Panc1 (cell line): ENCODE measurements at regions of chr10 and their contacts with region 1.

Region 1: GRCh38 chr10:60883187-60883586 is 60.8 kb downstream of the RHOBTB1 start:
- DNase-seq: peak; percentile 24
- ATAC-seq: peak; percentile 89
- H3K4me3 ChIP-seq: no peak overlapping the region
- H3K27ac ChIP-seq: no peak overlapping the region
- H3K4me1 ChIP-seq: no peaks in the 10 kb centered on the region
- H3K27me3 ChIP-seq: no peaks in the 10 kb centered on the region
- CTCF ChIP-seq: peak; percentile 77

Region 2: GRCh38 chr10:60964257-60965235 is 81.4 kb after region 1 on chr10:
- CTCF ChIA-PET with region 1: no interaction called
- POLR2A ChIA-PET with region 1: no interaction called
- in situ Hi-C with region 1: no loop called
- intact Hi-C with region 1: loop called (anchors 5 kb)
- DNase-seq: peak; percentile 78
- ATAC-seq: peak; percentile 87
- H3K4me3 ChIP-seq: no peak overlapping the region
- H3K27ac ChIP-seq: no peak overlapping the region
- H3K4me1 ChIP-seq: peaks cover 11% of the 10 kb centered on the region
- H3K27me3 ChIP-seq: peaks cover 2% of the 10 kb centered on the region; the same call in 1 of the 2 replicates
- CTCF ChIP-seq: peak; percentile 94